A673 (cell line): ENCODE measurements at regions of chr22 and their contacts with region 1.

Region 1: DNA sequence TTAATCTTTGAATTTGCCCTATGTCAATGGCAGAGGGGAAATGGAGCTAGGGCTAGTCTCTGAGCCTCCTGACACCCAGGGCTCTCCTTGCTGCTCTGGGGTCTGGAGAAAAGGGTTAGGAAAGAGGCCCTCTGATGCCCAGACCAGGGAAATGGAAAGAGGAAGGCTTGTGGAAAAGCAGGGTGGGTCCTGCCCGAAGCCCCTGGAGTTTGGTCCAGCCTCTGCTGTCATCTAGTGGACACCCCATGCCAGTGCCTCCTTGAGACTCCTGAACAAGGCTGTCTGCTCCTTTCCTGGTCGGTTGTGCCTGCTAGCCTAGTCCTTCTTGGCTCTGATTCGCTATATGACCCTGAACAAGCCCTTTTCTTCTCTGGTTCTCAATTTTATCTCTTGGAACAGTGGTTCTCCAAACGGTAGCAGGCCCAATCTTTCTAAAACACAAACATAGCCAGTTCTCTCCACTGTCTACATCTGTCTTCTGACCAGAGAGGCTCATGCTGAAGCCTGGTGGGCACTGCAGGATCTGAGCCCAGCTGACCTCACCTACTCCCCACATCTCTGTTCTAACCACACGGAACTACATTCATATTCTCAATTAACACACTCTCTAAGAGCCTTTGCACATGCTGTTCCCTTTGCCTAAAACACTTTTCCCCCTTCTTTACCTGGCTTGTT is 8.8 kb upstream of the PLA2G3 start:
- DNase-seq: peak; percentile 78
- H3K4me3 ChIP-seq: no peak overlapping the region
- H3K27ac ChIP-seq: no peak overlapping the region
- H3K4me1 ChIP-seq: no peaks in the 10 kb centered on the region
- H3K27me3 ChIP-seq: no peaks in the 10 kb centered on the region
- CTCF ChIP-seq: peak; percentile 87

Region 2: DNA sequence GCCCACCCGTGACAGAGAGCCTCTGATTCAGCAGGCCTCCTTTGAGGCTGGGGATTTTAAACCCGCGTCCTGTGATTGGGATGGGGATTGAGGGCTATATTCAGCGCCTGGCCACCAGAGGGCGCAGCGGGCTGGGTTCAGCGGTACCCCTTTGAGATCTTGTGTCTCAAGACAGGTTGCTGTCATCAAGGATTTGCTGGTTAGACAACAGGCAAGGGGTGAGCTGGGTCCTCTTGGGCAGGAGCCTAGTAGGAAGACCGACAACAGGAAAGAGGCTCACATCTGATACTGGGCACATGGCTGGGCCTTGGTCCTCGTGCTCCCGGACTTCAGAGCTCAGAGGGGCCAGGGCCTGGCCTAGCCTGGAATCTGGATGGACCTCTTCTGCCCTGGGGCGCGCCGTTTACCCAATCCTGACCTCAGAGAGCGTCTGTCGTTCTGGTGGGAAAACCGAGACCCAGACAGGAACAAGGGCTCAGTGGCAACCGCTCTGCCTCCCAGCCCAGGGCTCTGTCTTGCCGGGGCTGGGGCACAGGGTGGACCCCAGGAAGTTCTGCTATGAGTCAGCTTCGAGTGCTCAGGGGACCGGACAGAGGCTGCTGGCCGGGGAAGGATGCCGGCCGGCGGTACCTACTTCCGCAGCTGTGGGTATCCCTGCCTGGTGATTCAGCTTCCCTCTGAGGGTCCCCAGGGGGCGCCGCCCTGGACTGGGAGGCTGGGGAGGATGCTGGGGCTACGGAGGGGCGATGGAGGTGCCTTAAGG is 514.4 kb before region 1 on chr22:
- CTCF ChIA-PET with region 1: no interaction called
- POLR2A ChIA-PET with region 1: no interaction called
- intact Hi-C with region 1: loop called (anchors 2 kb)
- DNase-seq: peak; percentile 89
- H3K4me3 ChIP-seq: peak overlapping the region; percentile 63
- H3K27ac ChIP-seq: no peak overlapping the region
- H3K4me1 ChIP-seq: peaks cover 16% of the 10 kb centered on the region
- H3K27me3 ChIP-seq: no peaks in the 10 kb centered on the region
- CTCF ChIP-seq: peak; percentile 97

Region 3: DNA sequence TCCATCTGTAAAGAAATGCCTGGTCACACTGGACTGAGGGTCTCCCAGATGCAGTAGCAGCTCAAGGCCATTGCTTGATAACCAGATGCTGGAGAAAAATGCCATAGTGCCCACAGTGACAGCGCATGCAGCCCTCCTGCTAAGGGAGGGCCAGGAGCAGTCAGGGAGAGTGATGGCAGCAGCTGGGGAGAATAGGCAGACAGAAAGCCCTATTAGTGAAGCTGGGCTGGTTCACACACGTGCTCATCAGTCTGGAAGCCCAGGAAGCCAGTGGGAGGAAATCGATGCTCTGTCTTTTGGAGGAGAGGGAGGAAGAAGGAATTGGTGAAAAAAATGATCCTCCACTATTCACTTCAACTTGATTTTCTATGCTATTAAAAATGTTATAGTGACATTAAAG is 371.5 kb before region 1 on chr22:
- CTCF ChIA-PET with region 1: no interaction called
- POLR2A ChIA-PET with region 1: no interaction called
- intact Hi-C with region 1: loop called (anchors 5 kb)
- DNase-seq: no peak
- H3K4me3 ChIP-seq: no peak overlapping the region
- H3K27ac ChIP-seq: no peak overlapping the region
- H3K4me1 ChIP-seq: no peaks in the 10 kb centered on the region
- H3K27me3 ChIP-seq: no peaks in the 10 kb centered on the region
- CTCF ChIP-seq: no peak

Region 4: DNA sequence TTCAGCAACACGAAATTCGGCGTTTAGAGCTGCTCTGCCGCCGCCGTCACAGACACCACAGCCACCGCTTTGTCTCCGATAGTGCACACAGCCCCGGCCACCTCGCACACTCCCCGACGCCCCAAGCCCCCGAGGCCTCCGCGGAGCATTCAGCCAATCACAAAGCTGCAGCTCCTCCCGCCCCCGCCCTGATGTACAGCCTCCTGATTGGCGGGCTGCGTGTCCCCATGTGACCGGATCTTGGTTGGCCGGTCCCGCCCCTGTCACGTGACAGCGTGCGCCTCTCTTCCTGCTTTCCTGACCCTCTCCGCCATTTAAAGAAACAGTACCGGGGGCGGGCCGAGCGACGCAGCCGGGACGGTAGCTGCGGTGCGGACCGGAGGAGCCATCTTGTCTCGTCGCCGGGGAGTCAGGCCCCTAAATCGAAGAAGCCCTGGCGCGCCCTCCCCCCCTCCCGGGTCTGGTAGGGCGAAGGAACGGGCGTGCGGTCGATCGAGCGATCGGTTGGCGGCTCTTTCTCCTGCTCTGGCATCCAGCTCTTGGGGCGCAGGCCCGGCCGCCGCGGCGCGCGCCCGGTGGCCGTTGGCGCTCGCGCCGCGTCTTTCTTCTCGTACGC is 180.1 kb before region 1 on chr22 and contains the start of gene TUG1:
- CTCF ChIA-PET with region 1: no interaction called
- POLR2A ChIA-PET with region 1: no interaction called
- intact Hi-C with region 1: no loop called
- DNase-seq: peak; percentile 99
- H3K4me3 ChIP-seq: peak within 1 kb of the TSS; percentile 81
- H3K27ac ChIP-seq: peak within 1 kb of the TSS; percentile 96
- H3K4me1 ChIP-seq: no peaks in the 10 kb centered on the region
- H3K27me3 ChIP-seq: no peaks in the 10 kb centered on the region
- CTCF ChIP-seq: no peak
- total RNA-seq, gene TUG1: 65.8 and 70.0 TPM in 2 replicates

Region 5: DNA sequence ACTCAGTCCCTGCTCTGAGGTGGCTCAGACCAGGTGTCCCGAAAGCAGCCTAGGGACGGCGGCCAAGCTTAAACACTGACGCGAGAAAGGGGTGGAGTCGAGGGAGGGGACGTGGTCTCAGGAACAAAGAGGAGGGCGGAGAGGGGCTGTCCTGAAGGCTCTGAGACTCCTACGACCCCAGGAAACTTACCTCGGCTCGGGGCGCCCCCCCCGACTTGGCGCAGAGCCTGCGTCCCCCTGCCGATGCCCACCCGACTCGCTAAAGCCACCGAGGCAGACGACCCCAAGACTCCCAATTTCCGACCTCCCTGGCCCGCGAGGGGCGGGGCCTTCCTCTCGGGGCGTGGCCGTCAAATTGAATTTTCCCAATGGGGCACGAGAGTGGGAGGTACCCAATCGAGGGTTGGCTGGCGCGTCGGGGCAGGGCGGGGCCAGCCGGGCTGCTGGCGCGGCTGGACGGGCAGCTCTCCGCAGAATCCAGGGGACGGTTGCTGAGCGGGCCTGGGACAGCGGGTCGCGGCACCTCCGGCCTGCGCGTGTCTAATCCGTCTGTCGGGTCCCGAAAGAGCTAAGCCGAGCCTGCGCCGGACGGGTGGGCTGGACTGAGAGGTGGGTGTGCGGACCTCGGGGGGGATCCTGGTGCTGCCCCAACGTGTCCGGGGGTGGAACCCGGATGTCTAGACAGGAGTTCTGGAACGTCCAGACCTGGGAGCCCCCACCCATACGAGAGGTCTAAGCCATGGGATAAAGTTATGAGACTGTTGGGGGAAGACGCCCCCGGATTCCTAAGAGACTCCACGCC is 68.0 kb before region 1 on chr22 and contains the start of gene SMTN:
- CTCF ChIA-PET with region 1: no interaction called
- POLR2A ChIA-PET with region 1: no interaction called
- intact Hi-C with region 1: loop called (anchors 2 kb)
- DNase-seq: peak; percentile 93
- H3K4me3 ChIP-seq: peak within 1 kb of the TSS; percentile 62
- H3K27ac ChIP-seq: peak within 1 kb of the TSS; percentile 89
- H3K4me1 ChIP-seq: peaks cover 18% of the 10 kb centered on the region
- H3K27me3 ChIP-seq: no peaks in the 10 kb centered on the region
- CTCF ChIP-seq: no peak
- total RNA-seq, gene SMTN: 40.0 and 43.7 TPM in 2 replicates

Region 6: DNA sequence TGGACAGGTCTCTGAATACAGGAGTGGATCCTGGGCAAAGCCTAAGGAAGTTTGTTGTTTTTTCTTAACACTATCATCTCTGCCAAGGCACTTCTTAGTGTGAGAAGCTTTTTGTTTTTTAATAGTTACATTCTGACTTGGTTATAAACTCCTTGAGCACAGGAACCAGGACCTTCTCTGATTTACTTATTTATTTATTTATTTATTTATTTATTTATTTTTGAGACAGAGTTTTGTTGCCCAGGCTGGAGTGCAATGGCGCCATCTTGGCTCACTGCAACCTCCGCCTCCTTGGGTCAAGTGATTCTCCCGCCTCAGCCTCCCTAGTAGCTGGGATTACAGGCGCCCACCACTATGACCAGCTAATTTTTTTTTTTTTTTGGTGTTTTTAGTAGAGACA is 21.9 kb after region 1 on chr22:
- CTCF ChIA-PET with region 1: no interaction called
- POLR2A ChIA-PET with region 1: no interaction called
- intact Hi-C with region 1: no loop called
- DNase-seq: no peak
- H3K4me3 ChIP-seq: no peak overlapping the region
- H3K27ac ChIP-seq: no peak overlapping the region
- H3K4me1 ChIP-seq: peaks cover 3% of the 10 kb centered on the region
- H3K27me3 ChIP-seq: no peaks in the 10 kb centered on the region
- CTCF ChIP-seq: no peak